IMR-90 (cell line): ENCODE measurements at regions of chr3 and their contacts with region 1.

Region 1: DNA sequence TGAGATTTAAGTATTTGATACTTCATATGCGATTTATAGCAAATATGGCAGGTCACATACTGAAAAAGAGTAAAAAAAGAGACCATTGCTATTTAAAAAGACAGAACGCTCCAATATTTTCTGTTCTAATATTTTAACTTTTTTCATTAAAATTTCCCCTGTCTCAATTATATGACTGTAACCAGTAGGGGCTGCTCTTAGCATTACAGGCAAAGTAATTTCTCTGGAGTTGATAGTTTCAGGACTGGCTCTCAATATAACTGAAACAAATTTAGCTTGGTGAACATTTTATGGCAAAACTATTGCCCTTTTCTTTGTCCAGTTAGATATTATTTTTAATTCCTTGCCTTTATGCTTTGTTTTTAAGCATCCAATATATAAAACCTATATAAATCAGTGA is 286.3 kb upstream of the ROBO2 start:
- DNase-seq: peak; percentile 0
- ATAC-seq: peak; percentile 84
- H3K4me3 ChIP-seq: no peak overlapping the region
- H3K27ac ChIP-seq: no peak overlapping the region
- H3K4me1 ChIP-seq: no peaks in the 10 kb centered on the region
- H3K27me3 ChIP-seq: no peaks in the 10 kb centered on the region
- CTCF ChIP-seq: peak; percentile 36
- POLR2A ChIP-seq: no peak
- RAD21 ChIP-seq: 0 out of 2 replicates have a peak, but pooled peaks have one; percentile 21

Region 2: GRCh38 chr3:76958274-76958673 is 204.7 kb after region 1 on chr3:
- CTCF ChIA-PET with region 1: no interaction called
- POLR2A ChIA-PET with region 1: no interaction called
- dilution Hi-C with region 1: no loop called
- in situ Hi-C with region 1: no loop called
- intact Hi-C with region 1: loop called (anchors 10 kb)
- DNase-seq: no peak
- ATAC-seq: peak; percentile 52
- H3K4me3 ChIP-seq: no peak overlapping the region
- H3K27ac ChIP-seq: no peak overlapping the region
- H3K4me1 ChIP-seq: no peaks in the 10 kb centered on the region
- H3K27me3 ChIP-seq: no peaks in the 10 kb centered on the region
- CTCF ChIP-seq: no peak
- POLR2A ChIP-seq: no peak
- RAD21 ChIP-seq: no peak

Region 3: GRCh38 chr3:77254967-77255831 is 501.6 kb after region 1 on chr3:
- CTCF ChIA-PET with region 1: no interaction called
- POLR2A ChIA-PET with region 1: no interaction called
- dilution Hi-C with region 1: no loop called
- in situ Hi-C with region 1: no loop called
- intact Hi-C with region 1: loop called (anchors 5 kb)
- DNase-seq: peak; percentile 69
- ATAC-seq: peak; percentile 88
- H3K4me3 ChIP-seq: no peak overlapping the region
- H3K27ac ChIP-seq: no peak overlapping the region
- H3K4me1 ChIP-seq: no peaks in the 10 kb centered on the region
- H3K27me3 ChIP-seq: no peaks in the 10 kb centered on the region; the same call in 1 of the 2 replicates
- CTCF ChIP-seq: peak; percentile 74
- POLR2A ChIP-seq: no peak
- RAD21 ChIP-seq: peak; percentile 65

Region 4: DNA sequence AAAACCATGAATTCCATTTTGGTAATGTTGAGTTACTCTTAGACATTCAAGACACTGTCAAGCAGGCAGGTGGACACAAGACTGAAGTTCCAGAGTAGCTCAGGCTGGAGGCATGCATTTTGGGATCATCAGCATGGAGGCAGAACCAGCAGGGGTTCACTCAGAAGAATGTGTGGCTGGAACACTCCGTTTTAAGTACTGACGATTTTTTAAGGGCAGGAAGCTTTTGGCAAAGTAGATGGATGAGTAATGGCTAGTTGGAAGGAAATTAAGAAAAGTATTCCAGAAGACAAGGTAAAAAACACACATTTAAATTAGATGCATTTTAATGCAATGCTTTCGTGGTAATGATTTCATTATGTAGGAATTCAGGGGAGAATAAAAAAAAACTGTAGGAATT is 706.7 kb after region 1 on chr3:
- CTCF ChIA-PET with region 1: no interaction called
- POLR2A ChIA-PET with region 1: no interaction called
- dilution Hi-C with region 1: no loop called
- in situ Hi-C with region 1: no loop called
- intact Hi-C with region 1: no loop called
- DNase-seq: peak; percentile 18
- ATAC-seq: no peak
- H3K4me3 ChIP-seq: no peak overlapping the region
- H3K27ac ChIP-seq: no peak overlapping the region
- H3K4me1 ChIP-seq: no peaks in the 10 kb centered on the region
- H3K27me3 ChIP-seq: no peaks in the 10 kb centered on the region
- CTCF ChIP-seq: no peak
- POLR2A ChIP-seq: no peak
- RAD21 ChIP-seq: no peak